AG04449 (cell line): ENCODE measurements at regions of chr1 and their contacts with region 1.

Region 1: DNA sequence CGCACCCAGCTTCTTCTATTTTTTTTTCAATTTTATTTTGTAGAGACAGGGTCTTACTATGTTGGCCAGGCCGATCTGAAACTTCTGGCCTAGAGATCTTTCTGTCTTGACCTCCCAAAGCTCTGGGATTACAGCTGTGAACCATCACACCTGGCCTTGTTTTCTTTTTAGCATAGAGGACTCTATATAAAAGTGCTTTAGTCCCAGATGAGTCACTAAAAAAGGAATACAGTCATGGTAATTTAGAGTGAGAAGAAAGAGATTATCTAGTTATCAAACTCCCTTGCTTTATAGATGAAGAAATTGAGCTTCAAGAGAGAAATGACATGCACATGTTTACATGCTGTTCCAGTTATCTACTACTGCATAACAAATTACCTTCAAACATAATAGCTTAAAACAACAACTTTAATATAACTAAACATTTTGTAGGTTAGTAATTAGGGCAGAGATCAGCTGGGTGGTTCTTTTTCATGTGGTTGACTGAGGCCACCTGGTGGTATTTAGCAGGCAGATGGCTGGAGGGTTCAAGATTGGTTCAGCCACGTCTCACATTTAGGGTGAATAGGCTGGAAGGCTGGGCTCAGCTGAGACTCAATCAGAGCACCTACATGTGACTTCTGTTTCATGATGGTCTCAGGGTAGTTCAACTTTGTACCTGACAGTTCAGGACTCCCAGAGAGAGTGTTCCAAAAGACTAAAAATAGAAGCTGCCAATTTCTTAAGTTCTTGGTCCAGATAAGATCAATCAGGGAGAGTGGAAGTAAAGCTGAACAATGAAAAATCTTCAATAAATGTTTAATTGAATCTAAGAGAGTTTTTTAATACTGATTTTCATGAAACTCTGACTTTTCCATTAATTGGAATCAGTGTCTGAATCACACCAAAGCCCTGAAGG is 16.9 kb upstream of the MTF2 start:
- DNase-seq: no peak
- H3K4me3 ChIP-seq: no peak overlapping the region
- CTCF ChIP-seq: peak; percentile 26

Region 2: GRCh38 chr1:92922356-92923035 is 139.6 kb before region 1 on chr1:
- CTCF ChIA-PET with region 1: no interaction called
- POLR2A ChIA-PET with region 1: no interaction called
- DNase-seq: no peak
- H3K4me3 ChIP-seq: no peak overlapping the region
- CTCF ChIP-seq: no peak

Region 3: GRCh38 chr1:93021539-93022134 is 40.5 kb before region 1 on chr1:
- CTCF ChIA-PET with region 1: interaction called, 24 read pairs
- POLR2A ChIA-PET with region 1: no interaction called
- DNase-seq: no peak
- H3K4me3 ChIP-seq: no peak overlapping the region
- CTCF ChIP-seq: peak; percentile 58

Region 4: DNA sequence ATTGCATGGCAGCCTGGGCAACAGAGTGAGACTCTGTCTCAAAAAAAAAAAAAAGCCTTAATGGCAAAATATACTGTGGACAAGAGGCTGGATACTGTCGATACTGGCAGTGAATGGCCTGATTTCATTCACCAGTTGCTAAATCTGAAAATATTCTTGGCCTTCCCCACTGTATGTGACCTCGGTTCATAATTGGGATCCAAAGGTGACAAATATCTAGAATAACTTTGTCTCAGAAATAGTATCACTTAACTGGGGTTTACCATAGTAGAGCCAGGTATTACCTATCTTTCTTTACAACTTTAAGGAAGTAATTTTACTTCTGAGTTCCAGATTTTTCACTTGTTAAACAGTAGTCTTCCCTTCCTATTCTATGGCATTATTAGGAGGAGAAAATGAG is 25.4 kb after region 1 on chr1:
- CTCF ChIA-PET with region 1: no interaction called
- POLR2A ChIA-PET with region 1: no interaction called
- DNase-seq: no peak
- H3K4me3 ChIP-seq: no peak overlapping the region
- CTCF ChIP-seq: no peak

Region 5: DNA sequence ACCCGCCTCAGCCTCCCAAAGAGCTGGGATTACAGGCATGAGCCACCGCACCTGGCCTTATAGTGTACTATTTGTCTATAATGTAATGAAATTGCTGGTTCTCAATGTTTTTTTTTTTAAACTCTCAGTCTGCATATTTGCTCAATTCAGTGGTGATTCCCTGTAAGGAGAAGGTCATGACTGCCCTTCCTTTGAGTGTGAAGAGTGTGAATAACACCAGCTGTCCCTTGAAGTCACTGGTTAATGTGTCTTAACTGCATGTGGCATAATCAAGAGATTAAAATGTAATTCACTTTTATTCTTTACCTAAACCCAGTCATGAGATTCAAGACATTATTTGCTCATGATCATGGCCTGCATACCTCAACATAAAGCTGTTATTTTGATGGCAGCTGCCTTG is 47.4 kb after region 1 on chr1:
- CTCF ChIA-PET with region 1: no interaction called
- POLR2A ChIA-PET with region 1: no interaction called
- DNase-seq: no peak
- H3K4me3 ChIP-seq: no peak overlapping the region
- CTCF ChIP-seq: no peak

Region 6: GRCh38 chr1:93244298-93245069 is 182.3 kb after region 1 on chr1:
- CTCF ChIA-PET with region 1: no interaction called
- POLR2A ChIA-PET with region 1: no interaction called
- DNase-seq: no peak
- H3K4me3 ChIP-seq: no peak overlapping the region
- CTCF ChIP-seq: no peak